Prostate gland (tissue), 2 donors: ENCODE measurements at regions of chr6 and their contacts with region 1.

Region 1: DNA sequence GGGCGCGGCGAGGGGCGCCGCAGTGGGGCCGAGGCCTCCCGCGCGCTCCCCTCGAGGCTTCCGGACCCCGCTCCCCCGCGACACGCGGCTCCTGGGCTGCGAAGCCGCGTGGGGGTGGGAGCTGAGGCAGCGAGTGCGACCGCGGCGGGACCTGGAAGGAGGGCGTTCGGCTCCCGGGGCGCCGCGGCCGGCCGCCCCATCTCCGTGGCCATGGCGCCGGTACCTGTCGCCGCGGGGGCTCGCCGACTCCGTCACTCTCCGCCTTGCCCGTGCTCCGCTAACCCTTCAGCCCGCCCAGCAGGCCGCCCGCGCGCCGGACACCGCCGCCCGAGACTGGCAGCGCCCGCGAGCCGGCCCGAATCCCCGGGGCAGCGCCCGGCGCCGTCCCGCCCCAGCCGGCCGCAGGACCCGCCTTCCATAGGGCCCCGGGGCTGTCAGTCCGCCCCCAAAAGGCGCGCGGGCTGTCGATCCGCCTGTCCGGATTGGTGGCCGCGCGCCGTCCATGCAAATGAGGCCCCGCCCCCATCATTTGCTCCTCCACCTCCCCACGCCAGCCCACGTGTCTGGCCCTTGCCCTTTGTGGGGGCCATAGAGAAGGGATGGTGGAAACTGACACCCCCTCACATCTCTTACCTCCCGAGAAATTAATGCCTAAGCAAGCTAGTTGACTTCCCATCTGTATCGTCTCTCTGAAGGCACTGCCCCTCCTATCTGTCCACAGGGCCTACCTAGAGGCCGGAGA is at the start of gene FKBP5:
- DNase-seq: peak; percentile 97
- H3K4me3 ChIP-seq: peak within 1 kb of the TSS; percentile 99
- H3K27ac ChIP-seq: peak within 1 kb of the TSS; percentile 100
- H3K4me1 ChIP-seq: peaks cover 15% of the 10 kb centered on the region
- H3K27me3 ChIP-seq: no peaks in the 10 kb centered on the region
- CTCF ChIP-seq: peak in 1 of 4 experiments; percentile 13
- POLR2A ChIP-seq: peak; percentile 96
- total RNA-seq, gene FKBP5: 201 to 248 TPM

Region 2: GRCh38 chr6:35583893-35584688 is 104.7 kb before region 1 on chr6:
- intact Hi-C with region 1: loop called (anchors 5 kb)
- DNase-seq: peak; percentile 81
- H3K4me3 ChIP-seq: no peak overlapping the region
- H3K27ac ChIP-seq: peak overlapping the region; percentile 70 to 84
- H3K4me1 ChIP-seq: peaks cover 12% of the 10 kb centered on the region
- H3K27me3 ChIP-seq: no peaks in the 10 kb centered on the region
- CTCF ChIP-seq: peak; percentile 59 to 97 (median 87)
- POLR2A ChIP-seq: no peak

Region 3: GRCh38 chr6:35601331-35602132 is 87.2 kb before region 1 on chr6:
- intact Hi-C with region 1: loop called (anchors 5 kb)
- DNase-seq: peak; percentile 80
- H3K4me3 ChIP-seq: no peak overlapping the region
- H3K27ac ChIP-seq: peak overlapping the region; percentile 93 to 94
- H3K4me1 ChIP-seq: peaks cover 19% of the 10 kb centered on the region
- H3K27me3 ChIP-seq: no peaks in the 10 kb centered on the region
- CTCF ChIP-seq: peak in 1 of 4 experiments; percentile 9
- POLR2A ChIP-seq: no peak

Region 4: DNA sequence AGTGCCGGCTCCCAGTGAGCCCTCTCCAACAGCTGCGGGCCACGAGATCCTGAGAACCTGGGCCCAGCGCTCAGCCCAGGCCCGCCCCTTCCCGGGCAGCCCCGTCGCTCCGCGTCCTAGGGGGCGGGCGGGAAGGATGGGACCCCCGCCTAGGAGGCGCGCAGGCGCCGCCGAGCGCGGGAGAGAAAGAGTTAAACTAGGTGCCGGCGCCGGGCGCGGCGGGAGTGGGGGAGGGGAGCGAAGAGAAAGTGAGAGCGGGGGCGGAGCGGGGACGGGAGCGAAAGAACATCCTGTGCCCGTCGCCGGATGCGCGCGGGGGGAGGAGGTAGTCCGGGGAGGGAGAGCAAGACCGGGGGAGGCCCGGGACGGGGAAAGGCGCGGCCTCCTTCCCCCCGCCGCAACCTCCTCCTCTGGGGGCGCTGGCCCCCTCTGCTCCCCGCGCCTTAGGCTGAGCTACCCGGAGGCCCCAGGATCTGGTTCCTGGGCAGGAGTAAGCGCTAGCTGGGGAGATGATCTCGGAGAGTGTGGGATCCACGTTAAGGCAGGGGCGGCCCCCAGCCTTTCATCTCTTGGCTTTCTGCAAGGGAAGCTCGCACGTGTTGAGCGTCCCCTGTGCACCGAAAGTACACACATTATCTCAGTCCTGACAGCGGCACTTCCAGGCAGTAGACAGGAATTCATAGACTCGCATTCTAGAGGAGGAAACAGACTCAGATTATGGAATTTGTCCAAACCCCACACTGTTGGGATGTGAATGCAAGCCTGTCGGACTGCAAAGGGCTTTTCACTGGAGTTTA is 43.2 kb after region 1 on chr6:
- intact Hi-C with region 1: loop called (anchors 1 kb)
- DNase-seq: peak; percentile 98
- H3K4me3 ChIP-seq: peak overlapping the region; percentile 46 to 50
- H3K27ac ChIP-seq: peak overlapping the region; percentile 99 to 100
- H3K4me1 ChIP-seq: peaks cover 58% of the 10 kb centered on the region
- H3K27me3 ChIP-seq: no peaks in the 10 kb centered on the region
- CTCF ChIP-seq: peak in 1 of 4 experiments; percentile 10
- POLR2A ChIP-seq: peak; percentile 59